ENCODE measurements at regions of chr9 and their contacts with region 1.

Region 1: DNA sequence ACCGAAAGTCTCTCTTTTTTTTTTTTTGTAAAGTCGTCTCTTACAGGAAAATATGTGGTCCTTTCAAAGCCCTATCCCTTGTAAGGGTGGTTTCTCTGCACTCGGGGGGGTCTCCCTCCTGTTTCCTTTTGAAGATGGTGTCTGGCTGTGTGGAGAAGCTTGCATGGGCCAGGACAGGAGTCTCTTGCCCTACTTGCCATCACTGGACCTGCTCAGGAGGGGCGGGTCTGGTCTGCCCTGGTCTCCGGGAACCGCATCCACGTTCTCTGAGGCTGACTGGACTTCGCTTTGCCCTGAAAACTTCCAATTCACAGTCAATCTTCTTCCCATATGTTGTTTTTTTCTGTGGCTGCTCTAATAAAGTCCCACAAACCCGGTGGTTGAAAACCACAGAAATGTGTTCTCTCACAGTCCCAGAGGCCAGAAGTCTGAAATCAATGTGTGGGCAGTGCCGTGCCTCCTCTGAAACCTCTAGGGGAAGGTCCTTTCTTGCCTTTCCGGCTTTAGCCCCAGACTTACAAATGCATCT is 92.9 kb upstream of the IER5L start:
- DNase-seq: peak; percentile 83
- H3K4me3 ChIP-seq: no peak overlapping the region
- CTCF ChIP-seq: no peak

Region 2: DNA sequence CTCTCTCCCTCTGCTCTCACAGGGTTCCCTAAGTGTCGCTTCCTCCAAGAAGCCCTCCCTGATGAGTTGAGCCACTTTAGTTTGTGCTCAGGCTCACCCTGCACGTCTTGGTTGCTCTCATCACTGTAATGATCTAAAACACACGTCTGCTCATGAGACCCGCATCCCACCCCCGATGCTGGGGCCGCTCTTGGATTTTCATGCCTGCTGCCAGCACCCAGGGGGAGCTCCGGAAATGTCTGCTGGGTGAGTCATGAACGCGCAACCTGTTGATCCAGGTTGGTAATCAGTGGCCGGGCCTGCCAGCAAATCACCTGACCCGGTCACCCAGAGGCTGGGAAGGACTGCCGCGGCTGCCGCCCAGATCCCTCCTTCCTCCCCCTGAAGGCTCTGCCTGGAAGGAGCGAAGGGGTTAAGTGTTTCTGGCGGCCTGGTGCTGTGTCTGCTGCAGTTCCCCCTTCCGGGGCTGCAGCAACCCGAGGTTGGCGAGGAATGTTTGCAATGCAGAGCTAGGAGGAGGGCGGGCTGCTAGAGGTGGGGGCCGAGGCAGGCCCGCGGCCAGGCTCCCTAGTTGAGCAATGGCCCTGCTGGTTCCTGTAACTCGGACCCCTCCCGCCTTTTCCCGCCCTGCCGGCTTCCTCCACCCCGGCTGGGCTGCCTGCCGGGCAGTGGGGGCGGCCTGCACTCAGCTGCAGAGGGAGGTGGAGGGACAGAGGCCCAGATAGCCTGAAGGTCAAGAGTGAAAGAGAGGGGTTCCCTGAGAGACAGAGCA is 63.2 kb after region 1 on chr9:
- in situ Hi-C with region 1: loop called (anchors 10 kb)
- DNase-seq: peak; percentile 98
- H3K4me3 ChIP-seq: no peak overlapping the region
- CTCF ChIP-seq: no peak

Measured in astrocyte of the spinal cord (primary cell).